CD4-positive, alpha-beta T cell (primary cell): ENCODE measurements at regions of chr10 and their contacts with region 1.

Region 1: GRCh38 chr10:5889624-5890451 is at the starts of genes ANKRD16 and FBH1:
- DNase-seq: peak; percentile 94 to 99 (median 96)
- ATAC-seq: peak; percentile 87
- H3K4me3 ChIP-seq: peak within 1 kb of the TSS; percentile 79
- H3K4me3 Mint-ChIP-seq: peak within 1 kb of the TSS; percentile 95
- H3K27ac ChIP-seq: peak within 1 kb of the TSS in 1 of 2 donors; percentile 51
- H3K27ac Mint-ChIP-seq: peak within 1 kb of the TSS; percentile 80
- H3K4me1 ChIP-seq: peaks cover 32% of the 10 kb centered on the region
- H3K4me1 Mint-ChIP-seq: peaks cover 60% of the 10 kb centered on the region
- H3K27me3 ChIP-seq: no peaks in the 10 kb centered on the region
- H3K27me3 Mint-ChIP-seq: no peaks in the 10 kb centered on the region
- CTCF ChIP-seq: no peak
- total RNA-seq, gene ANKRD16: 1.4 to 1.8 TPM
- total RNA-seq, gene FBH1: 33.9 to 34.2 TPM

Region 2: GRCh38 chr10:5684318-5684970 is 205.4 kb before region 1 on chr10 and contains the start of gene TASOR2:
- CTCF ChIA-PET with region 1: no interaction called
- POLR2A ChIA-PET with region 1: interaction called, 12 read pairs
- intact Hi-C with region 1: loop called in 1 of 2 experiments (anchors 2 kb)
- DNase-seq: peak; percentile 87 to 98 (median 96)
- ATAC-seq: peak; percentile 82
- H3K4me3 ChIP-seq: peak within 1 kb of the TSS; percentile 71
- H3K4me3 Mint-ChIP-seq: peak within 1 kb of the TSS; percentile 98
- H3K27ac ChIP-seq: peak within 1 kb of the TSS; percentile 81 to 98
- H3K27ac Mint-ChIP-seq: peak within 1 kb of the TSS; percentile 98
- H3K4me1 ChIP-seq: peaks cover 27% of the 10 kb centered on the region
- H3K4me1 Mint-ChIP-seq: peaks cover 50% of the 10 kb centered on the region
- H3K27me3 ChIP-seq: no peaks in the 10 kb centered on the region
- H3K27me3 Mint-ChIP-seq: peaks cover 5% of the 10 kb centered on the region
- CTCF ChIP-seq: no peak
- total RNA-seq, gene TASOR2: 50.0 to 51.0 TPM

Region 3: GRCh38 chr10:5752301-5752871 is 137.5 kb before region 1 on chr10:
- CTCF ChIA-PET with region 1: no interaction called
- POLR2A ChIA-PET with region 1: no interaction called
- intact Hi-C with region 1: no loop called
- DNase-seq: no peak
- ATAC-seq: no peak
- H3K4me3 ChIP-seq: no peak overlapping the region
- H3K4me3 Mint-ChIP-seq: no peak overlapping the region
- H3K27ac ChIP-seq: no peak overlapping the region
- H3K27ac Mint-ChIP-seq: peak overlapping the region; percentile 78
- H3K4me1 ChIP-seq: peaks cover 21% of the 10 kb centered on the region
- H3K4me1 Mint-ChIP-seq: peaks cover 39% of the 10 kb centered on the region
- H3K27me3 ChIP-seq: no peaks in the 10 kb centered on the region
- H3K27me3 Mint-ChIP-seq: no peaks in the 10 kb centered on the region
- CTCF ChIP-seq: no peak

Region 4: GRCh38 chr10:5776136-5776880 is 113.5 kb before region 1 on chr10:
- CTCF ChIA-PET with region 1: no interaction called
- POLR2A ChIA-PET with region 1: interaction called, 11 read pairs
- intact Hi-C with region 1: no loop called
- DNase-seq: no peak
- ATAC-seq: peak; percentile 2
- H3K4me3 ChIP-seq: peak overlapping the region; percentile 25
- H3K4me3 Mint-ChIP-seq: peak overlapping the region; percentile 74
- H3K27ac ChIP-seq: peak overlapping the region; percentile 58 to 71
- H3K27ac Mint-ChIP-seq: peak overlapping the region; percentile 92
- H3K4me1 ChIP-seq: peaks cover 31% of the 10 kb centered on the region
- H3K4me1 Mint-ChIP-seq: peaks cover 64% of the 10 kb centered on the region
- H3K27me3 ChIP-seq: no peaks in the 10 kb centered on the region
- H3K27me3 Mint-ChIP-seq: no peaks in the 10 kb centered on the region
- CTCF ChIP-seq: no peak

Region 5: GRCh38 chr10:5813287-5814109 is 76.3 kb before region 1 on chr10 and contains the start of gene GDI2:
- CTCF ChIA-PET with region 1: interaction called, 3 read pairs
- POLR2A ChIA-PET with region 1: interaction called, 24 read pairs
- intact Hi-C with region 1: loop called in 1 of 2 experiments (anchors 1 kb)
- DNase-seq: peak; percentile 92 to 98 (median 96)
- ATAC-seq: peak; percentile 94
- H3K4me3 ChIP-seq: peak within 1 kb of the TSS; percentile 74
- H3K4me3 Mint-ChIP-seq: peak within 1 kb of the TSS; percentile 95
- H3K27ac ChIP-seq: peak within 1 kb of the TSS; percentile 92 to 97
- H3K27ac Mint-ChIP-seq: peak within 1 kb of the TSS; percentile 89
- H3K4me1 ChIP-seq: peaks cover 42% of the 10 kb centered on the region
- H3K4me1 Mint-ChIP-seq: peaks cover 60% of the 10 kb centered on the region
- H3K27me3 ChIP-seq: no peaks in the 10 kb centered on the region
- H3K27me3 Mint-ChIP-seq: no peaks in the 10 kb centered on the region
- CTCF ChIP-seq: no peak
- total RNA-seq, gene GDI2: 78.1 to 82.3 TPM

Region 6: GRCh38 chr10:5977471-5978229 is 87.8 kb after region 1 on chr10 and contains the start of gene IL15RA:
- CTCF ChIA-PET with region 1: no interaction called
- POLR2A ChIA-PET with region 1: interaction called, 12 read pairs
- intact Hi-C with region 1: loop called in 1 of 2 experiments (anchors 5 kb)
- DNase-seq: peak; percentile 61 to 92 (median 76)
- ATAC-seq: peak; percentile 76
- H3K4me3 ChIP-seq: peak within 1 kb of the TSS; percentile 91
- H3K4me3 Mint-ChIP-seq: peak within 1 kb of the TSS; percentile 97
- H3K27ac ChIP-seq: peak within 1 kb of the TSS; percentile 55 to 64
- H3K27ac Mint-ChIP-seq: peak within 1 kb of the TSS; percentile 90
- H3K4me1 ChIP-seq: peaks cover 25% of the 10 kb centered on the region
- H3K4me1 Mint-ChIP-seq: peaks cover 21% of the 10 kb centered on the region
- H3K27me3 ChIP-seq: no peaks in the 10 kb centered on the region
- H3K27me3 Mint-ChIP-seq: no peaks in the 10 kb centered on the region
- CTCF ChIP-seq: no peak
- total RNA-seq, gene IL15RA: 4.4 TPM

Region 7: GRCh38 chr10:6163364-6164270 is 273.8 kb after region 1 on chr10:
- CTCF ChIA-PET with region 1: no interaction called
- POLR2A ChIA-PET with region 1: no interaction called
- intact Hi-C with region 1: loop called in 1 of 2 experiments (anchors 5 kb)
- DNase-seq: peak; percentile 83 to 97 (median 92)
- ATAC-seq: peak; percentile 86
- H3K4me3 ChIP-seq: peak overlapping the region; percentile 71
- H3K4me3 Mint-ChIP-seq: peak overlapping the region; percentile 90
- H3K27ac ChIP-seq: peak overlapping the region; percentile 91 to 93
- H3K27ac Mint-ChIP-seq: peak overlapping the region; percentile 94
- H3K4me1 ChIP-seq: peaks cover 42% of the 10 kb centered on the region
- H3K4me1 Mint-ChIP-seq: peaks cover 47% of the 10 kb centered on the region
- H3K27me3 ChIP-seq: no peaks in the 10 kb centered on the region
- H3K27me3 Mint-ChIP-seq: no peaks in the 10 kb centered on the region
- CTCF ChIP-seq: no peak